Posterior vena cava (tissue), 2 donors: ENCODE measurements at regions of chr22 and their contacts with region 1.

Region 1: GRCh38 chr22:22959147-22959827 is 71.7 kb downstream of the IGLL5 start:
- DNase-seq: no peak

Region 2: GRCh38 chr22:22855617-22856308 is 103.5 kb before region 1 on chr22:
- intact Hi-C with region 1: loop called in 1 of 2 experiments (anchors 10 kb)
- DNase-seq: no peak

Region 3: DNA sequence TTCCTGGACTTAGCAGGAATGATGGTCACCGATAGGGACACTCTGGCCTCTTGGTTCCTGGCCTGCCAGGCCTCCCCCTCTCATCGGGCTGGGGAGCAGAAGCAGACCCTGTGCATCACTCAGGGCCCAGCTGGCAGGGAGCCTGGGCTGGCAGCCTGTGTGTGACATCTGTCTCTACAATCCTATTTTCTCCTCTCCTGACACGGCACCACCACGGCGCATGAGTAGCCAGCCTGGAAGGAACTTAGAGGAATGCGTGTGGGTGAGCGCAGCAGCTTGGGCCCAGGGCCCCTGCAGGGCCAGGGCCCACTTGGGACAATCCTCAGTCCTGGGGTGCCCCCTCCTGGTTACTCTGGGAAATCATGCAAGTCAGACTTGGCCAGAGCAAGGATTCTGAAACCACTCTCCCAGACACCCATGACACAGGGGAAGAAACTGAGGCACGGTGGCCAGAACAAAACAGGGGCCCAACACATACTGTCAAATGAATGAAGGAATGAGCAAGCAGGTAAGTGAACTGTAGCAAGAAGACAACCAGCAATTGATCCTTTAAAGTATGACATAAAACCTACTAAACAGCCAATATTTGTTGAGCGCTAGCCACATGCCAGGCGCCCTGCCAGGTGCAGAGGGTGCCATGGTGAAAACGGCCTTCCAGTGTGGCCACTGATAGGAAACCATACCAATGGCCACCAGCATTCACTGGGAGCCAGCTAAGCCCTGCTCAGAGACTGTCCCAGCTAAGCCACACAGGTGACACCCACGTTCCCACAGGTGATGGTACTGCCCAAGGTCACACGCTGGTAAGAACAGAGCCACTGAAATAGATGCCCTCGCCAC is 169.2 kb after region 1 on chr22:
- intact Hi-C with region 1: loop called (anchors 2 to 5 kb)
- DNase-seq: peak; percentile 88